ENCODE measurements at regions of chr1 and their contacts with region 1.

Region 1: DNA sequence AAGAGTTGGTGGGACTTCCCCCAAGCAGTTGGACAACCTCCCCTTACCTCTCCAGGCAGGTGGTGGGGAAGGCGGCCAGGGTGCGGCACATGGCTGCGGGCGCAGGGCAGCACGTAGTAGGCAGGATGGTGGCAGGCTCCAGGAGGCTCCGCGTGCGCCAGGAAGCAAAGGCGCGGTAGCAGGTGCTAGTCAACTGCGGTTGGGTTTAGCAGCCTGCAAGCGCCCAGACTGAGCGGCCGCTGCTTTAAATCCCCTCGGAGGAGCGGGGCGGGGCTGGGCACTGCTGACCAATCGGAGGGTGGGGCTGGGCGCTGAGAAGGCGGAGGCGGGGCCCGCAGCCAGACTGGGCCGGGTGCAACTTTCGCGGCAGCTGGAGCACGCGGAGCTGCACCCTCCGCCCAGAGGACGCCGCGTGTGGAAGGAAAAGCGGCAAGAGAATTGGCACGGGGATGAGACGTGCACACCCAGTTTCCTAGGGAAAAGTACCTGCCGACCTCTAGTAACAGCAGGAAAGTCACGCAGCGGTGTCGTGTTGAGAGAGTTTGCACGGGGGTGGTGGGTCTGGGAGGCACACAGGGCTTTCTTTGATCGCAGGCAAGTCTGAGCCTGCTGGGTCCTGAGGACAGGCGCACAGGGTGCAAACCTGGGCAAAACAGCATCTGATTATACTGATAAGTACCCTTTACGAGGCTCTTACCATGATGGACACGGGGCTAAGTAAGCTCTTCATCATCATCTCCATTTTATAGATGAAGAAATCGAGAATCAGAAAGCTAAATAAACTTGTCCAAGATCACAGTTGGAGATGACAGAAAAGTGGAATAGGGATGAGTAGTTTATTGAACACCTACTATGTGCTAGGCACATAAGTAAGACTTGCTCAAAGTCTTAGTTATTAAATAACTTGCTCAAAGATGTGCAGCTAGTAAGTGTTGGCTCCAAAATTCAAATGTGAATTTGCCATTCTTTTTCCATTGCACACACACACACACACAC is at the start of gene RGS16:
- DNase-seq: peak; percentile 59 to 92 (median 75)
- ATAC-seq: peak; percentile 88 to 96 (median 94)
- H3K4me3 ChIP-seq: peak within 1 kb of the TSS; percentile 33 to 55
- H3K4me3 Mint-ChIP-seq: peak within 1 kb of the TSS; percentile 71 to 82 (median 81)
- H3K27ac ChIP-seq: peak within 1 kb of the TSS; percentile 31
- H3K27ac Mint-ChIP-seq: peak within 1 kb of the TSS; percentile 23 to 80
- H3K4me1 ChIP-seq: peaks cover 12 to 25% of the 10 kb centered on the region in 2 experiments
- H3K4me1 Mint-ChIP-seq: peaks cover 0 to 10% (median 6%) of the 10 kb centered on the region in 3 donors
- H3K27me3 ChIP-seq: peaks cover 0 to 12% of the 10 kb centered on the region in 2 experiments
- H3K27me3 Mint-ChIP-seq: peaks cover 4 to 10% of the 10 kb centered on the region in 2 donors
- total RNA-seq, gene RGS16: 2.9 to 15.6 (median 4.6) TPM

Region 2: DNA sequence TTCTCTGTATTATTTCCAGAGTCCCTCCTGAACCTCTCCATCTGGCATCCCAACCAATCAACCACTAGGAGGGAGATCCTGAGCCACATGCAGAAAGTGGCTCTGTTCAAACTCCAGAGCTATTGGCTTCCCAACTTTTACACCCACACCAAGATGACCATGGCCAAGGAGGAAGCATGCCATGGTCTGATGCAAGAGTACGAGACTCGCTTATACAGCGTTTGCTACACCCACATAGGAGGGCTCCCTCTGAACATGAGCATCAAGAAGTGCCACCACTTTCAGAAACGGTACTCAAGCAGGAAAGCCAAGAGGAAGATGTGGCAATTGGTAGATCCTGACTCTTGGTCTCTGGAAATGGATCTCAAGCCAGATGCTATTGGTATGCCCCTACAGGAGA is 130.9 kb before region 1 on chr1:
- CTCF ChIA-PET with region 1: no interaction called
- POLR2A ChIA-PET with region 1: no interaction called
- DNase-seq: no peak
- ATAC-seq: no peak
- H3K4me3 ChIP-seq: no peak overlapping the region
- H3K4me3 Mint-ChIP-seq: no peak overlapping the region
- H3K27ac ChIP-seq: no peak overlapping the region
- H3K27ac Mint-ChIP-seq: no peak overlapping the region
- H3K4me1 ChIP-seq: no peaks in the 10 kb centered on the region
- H3K4me1 Mint-ChIP-seq: no peaks in the 10 kb centered on the region
- H3K27me3 ChIP-seq: peaks cover 0 to 10% of the 10 kb centered on the region in 2 experiments
- H3K27me3 Mint-ChIP-seq: peaks cover 10 to 20% of the 10 kb centered on the region in 2 donors

Region 3: GRCh38 chr1:182588500-182589452 is 15.7 kb before region 1 on chr1 and contains the start of gene RNASEL:
- CTCF ChIA-PET with region 1: interaction called, 8 to 11 read pairs
- POLR2A ChIA-PET with region 1: interaction called in 1 of 2 experiments, 6 read pairs
- DNase-seq: peak; percentile 20 to 82 (median 48)
- ATAC-seq: peak; percentile 88 to 90 (median 89)
- H3K4me3 ChIP-seq: peak within 1 kb of the TSS; percentile 68 to 100
- H3K4me3 Mint-ChIP-seq: peak within 1 kb of the TSS; percentile 94 to 100 (median 98)
- H3K27ac ChIP-seq: peak within 1 kb of the TSS; percentile 93
- H3K27ac Mint-ChIP-seq: peak within 1 kb of the TSS; percentile 100
- H3K4me1 ChIP-seq: peaks cover 7 to 33% of the 10 kb centered on the region in 2 experiments
- H3K4me1 Mint-ChIP-seq: peaks cover 46 to 57% (median 54%) of the 10 kb centered on the region in 3 donors
- H3K27me3 ChIP-seq: no peaks in the 10 kb centered on the region
- H3K27me3 Mint-ChIP-seq: no peaks in the 10 kb centered on the region
- total RNA-seq, gene RNASEL: 10.5 to 20.8 (median 18.7) TPM

Region 4: DNA sequence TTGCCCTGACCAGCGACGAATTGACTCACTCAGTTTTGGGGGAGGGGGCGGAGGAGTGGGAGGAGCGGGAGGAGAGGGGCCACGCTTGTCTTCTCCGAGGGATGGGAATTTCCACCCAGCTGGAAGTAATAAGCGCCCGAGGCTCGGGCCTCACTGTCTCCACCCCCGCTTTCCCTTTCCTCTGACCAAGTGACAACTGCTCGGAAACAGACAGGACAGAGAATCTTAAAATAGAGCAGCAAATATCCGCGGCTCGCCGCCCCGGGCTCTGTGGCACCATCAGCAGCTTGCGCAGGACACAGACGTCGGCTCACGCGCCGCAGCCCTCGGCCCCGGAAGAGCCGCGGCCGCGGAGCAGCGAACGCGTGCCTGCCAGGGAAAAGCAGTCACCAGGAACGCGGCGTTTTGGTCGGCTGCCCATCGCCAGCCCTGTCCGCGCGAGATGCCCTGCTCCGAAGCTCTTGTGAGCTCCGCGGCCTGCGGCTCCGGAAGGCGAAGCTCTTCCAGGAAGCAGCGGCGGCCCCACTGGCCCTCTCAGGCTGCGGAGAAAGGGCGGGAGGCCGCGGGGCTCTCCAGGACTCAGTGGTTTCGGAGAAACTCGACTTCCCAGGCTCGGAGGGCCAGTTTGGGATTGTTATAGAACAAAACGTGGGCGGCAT is 10.5 kb after region 1 on chr1:
- CTCF ChIA-PET with region 1: interaction called, 6 to 20 read pairs
- POLR2A ChIA-PET with region 1: interaction called, 7 to 8 read pairs
- DNase-seq: peak in 15 of 35 experiments; percentile 16 to 67 (median 36)
- ATAC-seq: peak in 3 of 4 experiments; percentile 11 to 40 (median 25)
- H3K4me3 ChIP-seq: peak overlapping the region; percentile 56 to 94
- H3K4me3 Mint-ChIP-seq: peak overlapping the region; percentile 76 to 83 (median 79)
- H3K27ac ChIP-seq: no peak overlapping the region
- H3K27ac Mint-ChIP-seq: no peak overlapping the region
- H3K4me1 ChIP-seq: peaks cover 19 to 32% of the 10 kb centered on the region in 2 experiments
- H3K4me1 Mint-ChIP-seq: peaks cover 36 to 40% (median 39%) of the 10 kb centered on the region in 3 donors
- H3K27me3 ChIP-seq: peaks cover 16 to 50% of the 10 kb centered on the region in 2 experiments
- H3K27me3 Mint-ChIP-seq: peaks cover 25 to 34% of the 10 kb centered on the region in 2 donors

Region 5: DNA sequence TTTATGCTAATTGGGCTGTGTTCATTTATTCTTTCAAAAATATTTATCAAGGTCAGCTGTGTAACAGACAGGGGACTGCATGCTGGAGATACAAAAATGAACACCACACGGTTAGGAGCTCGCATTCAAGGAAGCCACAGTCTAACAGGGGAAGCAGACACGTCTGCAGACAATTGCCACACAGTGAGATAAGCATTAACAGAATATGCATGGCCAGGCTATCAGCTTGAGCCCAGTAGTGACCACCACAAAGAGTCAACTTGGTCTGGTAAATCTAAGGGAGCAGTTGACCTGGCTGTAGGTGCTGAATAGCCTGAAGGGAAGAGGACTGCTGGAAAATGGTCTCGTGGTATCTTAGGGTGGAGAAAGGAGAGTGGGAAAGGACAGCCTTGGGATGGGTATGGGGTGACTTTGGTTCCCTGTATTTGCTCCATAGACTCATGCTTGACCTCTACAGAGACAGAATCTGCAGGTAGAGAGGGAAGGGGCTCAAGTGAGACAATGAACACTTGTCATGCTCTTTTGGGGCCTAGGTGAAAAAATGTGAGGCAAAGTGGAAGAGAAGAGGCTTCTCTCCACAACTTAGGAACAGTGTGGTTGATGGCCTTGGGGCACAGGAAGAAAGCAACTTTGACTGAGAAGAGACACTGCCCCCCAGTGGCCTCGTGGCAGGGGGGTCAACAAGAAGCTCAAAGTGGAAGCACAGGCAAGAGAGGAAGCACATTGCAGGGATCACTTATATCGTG is 177.5 kb after region 1 on chr1:
- CTCF ChIA-PET with region 1: interaction called, 161 to 257 read pairs
- POLR2A ChIA-PET with region 1: interaction called in 1 of 2 experiments, 4 read pairs
- DNase-seq: peak; percentile 29 to 77 (median 52)
- ATAC-seq: peak; percentile 65 to 83 (median 82)
- H3K4me3 ChIP-seq: no peak overlapping the region
- H3K4me3 Mint-ChIP-seq: no peak overlapping the region
- H3K27ac ChIP-seq: no peak overlapping the region
- H3K27ac Mint-ChIP-seq: no peak overlapping the region
- H3K4me1 ChIP-seq: no peaks in the 10 kb centered on the region
- H3K4me1 Mint-ChIP-seq: peaks cover 4 to 10% (median 5%) of the 10 kb centered on the region in 3 donors
- H3K27me3 ChIP-seq: no peaks in the 10 kb centered on the region
- H3K27me3 Mint-ChIP-seq: no peaks in the 10 kb centered on the region

Region 6: DNA sequence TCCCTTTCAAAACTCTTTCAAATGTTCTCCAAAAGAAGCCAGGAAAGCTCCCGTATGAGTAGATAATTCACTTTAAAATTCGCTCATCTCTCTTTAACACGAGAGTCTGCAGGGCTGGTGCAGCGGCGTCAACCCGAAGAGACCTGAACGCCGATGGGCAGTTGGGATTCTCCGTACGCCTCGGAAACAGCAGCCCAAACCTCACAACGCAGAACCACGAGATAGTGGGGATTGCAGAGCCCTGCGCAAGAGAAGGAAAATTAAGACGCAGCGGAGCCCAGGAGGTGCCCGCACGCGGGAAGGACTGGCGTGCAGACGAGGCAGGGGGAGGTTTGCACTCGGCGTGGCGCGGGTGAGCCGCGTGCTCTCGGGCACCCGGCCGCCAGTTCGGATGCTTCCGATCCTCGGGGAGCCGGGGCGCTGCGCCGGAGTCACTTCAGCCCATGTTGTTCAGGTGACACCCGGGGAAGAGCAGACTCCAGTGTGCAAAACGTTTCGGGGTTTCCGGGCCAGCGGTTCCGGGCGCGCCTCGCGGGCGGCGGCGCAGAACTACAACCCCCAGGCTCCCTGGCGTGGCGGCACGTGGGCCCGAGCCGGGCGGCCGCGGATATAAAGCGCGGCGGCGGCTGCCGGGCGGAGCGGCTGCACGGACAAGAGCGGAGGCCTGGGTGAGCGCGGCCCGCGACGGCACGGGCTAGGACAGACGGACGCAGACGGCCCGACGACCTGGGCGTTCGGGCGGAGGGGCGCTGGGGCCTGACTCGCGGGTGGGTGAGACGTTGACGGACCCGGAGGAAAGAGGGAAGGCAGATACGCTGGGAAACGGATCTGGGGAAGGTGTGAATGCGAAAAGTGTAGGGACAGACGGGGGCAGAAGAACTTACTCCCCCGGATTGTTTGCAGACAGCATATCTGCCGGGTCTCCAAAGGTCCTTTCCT is 184.9 kb after region 1 on chr1 and contains the start of gene NPL:
- CTCF ChIA-PET with region 1: interaction called, 161 to 257 read pairs
- POLR2A ChIA-PET with region 1: interaction called in 1 of 2 experiments, 4 read pairs
- DNase-seq: peak; percentile 74 to 92 (median 81)
- ATAC-seq: peak; percentile 98
- H3K4me3 ChIP-seq: peak within 1 kb of the TSS; percentile 73 to 79
- H3K4me3 Mint-ChIP-seq: peak within 1 kb of the TSS; percentile 88 to 94 (median 90)
- H3K27ac ChIP-seq: peak within 1 kb of the TSS; percentile 65
- H3K27ac Mint-ChIP-seq: peak within 1 kb of the TSS; percentile 84 to 90
- H3K4me1 ChIP-seq: peaks cover 9 to 10% of the 10 kb centered on the region in 2 experiments
- H3K4me1 Mint-ChIP-seq: peaks cover 7 to 15% (median 14%) of the 10 kb centered on the region in 3 donors
- H3K27me3 ChIP-seq: peaks cover 0 to 2% of the 10 kb centered on the region in 2 experiments
- H3K27me3 Mint-ChIP-seq: no peaks in the 10 kb centered on the region
- total RNA-seq, gene NPL: 2.5 to 5.4 (median 4.2) TPM

Measured in T-cell (primary cell).